Motor neuron (in vitro differentiated cells): ENCODE measurements at regions of chr20 and their contacts with region 1.

Region 1: GRCh38 chr20:17604852-17605660 is 35.2 kb downstream of the DSTN start:
- ATAC-seq: no peak
- H3K4me3 ChIP-seq: no peak overlapping the region
- H3K27ac ChIP-seq: no peak overlapping the region
- H3K4me1 ChIP-seq: peaks cover 2 to 3% of the 10 kb centered on the region in 2 donors

Region 2: DNA sequence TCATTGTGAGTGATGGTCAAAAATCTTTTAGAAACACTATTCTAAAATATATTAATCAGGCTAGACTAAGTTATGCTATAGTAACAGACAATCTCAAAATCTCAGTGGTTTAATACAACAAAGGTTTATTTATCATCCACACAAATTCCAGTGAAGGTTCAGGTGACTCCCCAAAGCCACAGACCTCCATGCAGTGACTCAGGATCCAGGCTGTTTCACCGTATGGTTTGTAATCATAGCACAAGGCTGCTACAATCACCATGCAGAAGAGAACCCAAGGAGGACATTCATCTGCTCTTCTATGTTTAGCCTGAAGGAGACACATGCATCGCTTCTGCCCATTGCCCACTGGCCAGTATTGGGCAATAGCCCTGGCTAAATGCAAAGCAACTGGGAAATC is 120.0 kb before region 1 on chr20:
- in situ Hi-C with region 1: no loop called
- ATAC-seq: no peak
- H3K4me3 ChIP-seq: no peak overlapping the region
- H3K27ac ChIP-seq: no peak overlapping the region
- H3K4me1 ChIP-seq: no peaks in the 10 kb centered on the region

Region 3: GRCh38 chr20:17536944-17537444 is 68.1 kb before region 1 on chr20:
- in situ Hi-C with region 1: loop called in 1 of 9 experiments (anchors 10 kb)
- ATAC-seq: peak; percentile 88 to 99 (median 96)
- H3K4me3 ChIP-seq: no peak overlapping the region
- H3K27ac ChIP-seq: no peak overlapping the region
- H3K4me1 ChIP-seq: peaks cover 7 to 10% of the 10 kb centered on the region in 2 donors

Region 4: GRCh38 chr20:17771206-17772004 is 166.3 kb after region 1 on chr20:
- in situ Hi-C with region 1: no loop called
- ATAC-seq: peak in 1 of 8 experiments; percentile 28
- H3K4me3 ChIP-seq: no peak overlapping the region
- H3K27ac ChIP-seq: no peak overlapping the region
- H3K4me1 ChIP-seq: no peaks in the 10 kb centered on the region